ENCODE measurements at regions of chr1 and their contacts with region 1.

Region 1: GRCh38 chr1:6579374-6580118 is at the start of gene ZBTB48:
- DNase-seq: peak; percentile 99 to 100
- H3K4me3 ChIP-seq: peak within 1 kb of the TSS; percentile 80
- CTCF ChIP-seq: no peak
- POLR2A ChIP-seq: peak in 1 of 2 donors; percentile 61
- total RNA-seq, gene ZBTB48: 31.6 to 40.4 (median 34.8) TPM

Region 2: DNA sequence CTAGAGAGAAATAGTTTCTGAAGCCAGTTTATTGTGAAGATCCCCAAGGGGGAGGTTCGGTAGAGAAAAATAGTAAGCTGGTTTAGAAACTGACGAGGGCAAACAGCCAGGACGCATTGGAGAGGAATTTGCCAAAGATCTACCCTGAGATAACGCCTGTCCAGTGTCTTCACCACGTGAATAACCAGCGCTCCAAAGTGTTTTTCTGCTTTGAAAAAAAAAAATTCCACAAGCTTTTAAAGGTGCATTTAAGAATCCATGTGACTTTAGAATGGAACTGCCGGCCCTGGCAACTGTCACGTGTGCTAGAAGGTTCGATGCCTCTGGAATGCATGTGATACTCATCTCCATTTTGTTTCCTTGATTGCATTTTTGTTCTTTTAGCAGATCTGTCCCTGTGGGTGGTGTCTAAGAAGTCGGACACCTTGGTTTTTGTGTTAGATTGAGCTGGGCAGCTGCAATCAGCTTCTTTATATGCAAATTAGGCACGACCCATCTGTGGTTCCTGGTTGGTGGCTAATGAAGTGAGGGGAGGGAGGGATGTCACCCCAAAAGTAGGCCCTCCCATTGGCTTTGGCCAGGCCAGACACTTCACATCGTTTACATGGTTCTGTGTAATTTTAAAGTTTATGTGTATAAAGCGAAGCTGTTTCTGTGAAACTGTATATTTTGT is 43.9 kb after region 1 on chr1:
- intact Hi-C with region 1: no loop called
- DNase-seq: no peak
- H3K4me3 ChIP-seq: no peak overlapping the region
- CTCF ChIP-seq: no peak
- POLR2A ChIP-seq: no peak

Region 3: DNA sequence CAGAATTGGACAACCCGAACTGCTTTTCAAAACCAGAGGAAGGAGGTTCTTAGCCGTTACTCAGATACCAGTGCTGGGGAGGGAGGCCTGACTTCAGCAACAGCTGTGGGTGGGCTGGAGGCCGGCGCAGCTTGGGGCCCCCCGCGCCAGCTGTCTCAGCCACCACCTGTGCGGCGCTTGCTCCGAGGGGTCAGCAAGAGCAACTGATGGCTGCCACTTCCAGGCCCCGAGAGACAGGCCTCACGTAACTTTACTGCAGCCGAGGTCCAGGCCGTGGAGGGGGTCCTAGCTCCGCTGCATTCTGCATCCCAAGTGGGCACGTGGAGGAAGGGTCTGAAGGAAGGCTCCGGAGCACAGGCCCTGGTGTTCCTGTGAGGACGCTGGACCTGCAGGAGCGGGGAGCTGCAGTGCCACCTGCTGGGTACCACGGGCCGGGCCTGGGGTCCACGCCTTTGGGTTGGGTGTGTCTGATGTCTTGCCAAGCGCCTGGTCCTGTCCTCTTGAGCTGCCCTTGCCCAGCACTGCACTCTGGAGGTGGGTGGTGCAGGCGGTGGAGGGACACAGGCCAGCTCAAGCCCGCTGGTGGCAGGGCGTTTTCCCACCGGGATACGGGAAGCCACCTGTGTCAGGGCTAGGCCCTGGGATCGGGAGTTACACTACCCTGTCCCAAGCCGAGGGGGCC is 55.0 kb after region 1 on chr1:
- intact Hi-C with region 1: loop called (anchors 10 kb)
- DNase-seq: no peak
- H3K4me3 ChIP-seq: no peak overlapping the region
- CTCF ChIP-seq: no peak
- POLR2A ChIP-seq: no peak

Region 4: GRCh38 chr1:6646499-6647148 is 67.1 kb after region 1 on chr1:
- intact Hi-C with region 1: no loop called
- DNase-seq: no peak
- H3K4me3 ChIP-seq: no peak overlapping the region
- CTCF ChIP-seq: peak in 1 of 3 donors; percentile 13
- POLR2A ChIP-seq: no peak

Region 5: GRCh38 chr1:7366955-7367665 is 787.6 kb after region 1 on chr1:
- intact Hi-C with region 1: no loop called
- DNase-seq: no peak
- H3K4me3 ChIP-seq: no peak overlapping the region
- CTCF ChIP-seq: no peak
- POLR2A ChIP-seq: no peak

Measured in lower leg skin (tissue), 4 donors.